Vagina (tissue), 2 donors: ENCODE measurements at regions of chr11 and their contacts with region 1.

Region 1: DNA sequence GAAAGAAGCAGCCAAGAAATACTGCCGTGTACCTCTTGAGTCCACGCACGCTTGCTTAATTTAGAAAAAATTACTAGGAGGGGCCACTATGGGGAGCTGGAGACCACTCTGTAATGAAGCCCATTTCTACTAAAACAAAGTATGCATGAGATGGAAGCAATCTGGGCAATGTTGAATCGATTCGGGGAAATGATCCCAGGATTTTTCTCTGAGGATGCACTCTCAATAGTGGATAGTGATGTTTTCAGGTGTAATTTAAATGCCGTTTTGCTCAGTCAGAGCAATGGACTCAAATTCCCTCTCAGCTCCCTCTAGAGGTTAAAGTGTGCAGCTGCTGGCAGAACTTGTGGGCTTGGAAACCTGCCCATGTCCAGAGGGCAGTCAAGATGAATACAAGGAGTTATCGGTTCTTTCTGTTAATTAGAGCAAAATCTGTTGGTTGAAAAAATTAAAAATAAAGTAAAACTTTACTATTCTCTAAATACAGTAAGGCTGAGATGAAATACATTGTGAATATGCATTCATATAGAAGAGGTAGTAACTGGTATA is 64.1 kb downstream of the ME3 start:
- DNase-seq: no peak
- H3K4me3 ChIP-seq: no peak overlapping the region
- H3K27ac ChIP-seq: peak overlapping the region; percentile 70
- H3K4me1 ChIP-seq: peaks cover 26% of the 10 kb centered on the region
- H3K27me3 ChIP-seq: no peaks in the 10 kb centered on the region
- CTCF ChIP-seq: peak; percentile 67 to 89 (median 73)
- POLR2A ChIP-seq: no peak

Region 2: GRCh38 chr11:86314646-86315045 is 293.7 kb before region 1 on chr11:
- intact Hi-C with region 1: no loop called
- DNase-seq: no peak
- H3K4me3 ChIP-seq: no peak overlapping the region
- H3K27ac ChIP-seq: no peak overlapping the region
- H3K4me1 ChIP-seq: no peaks in the 10 kb centered on the region
- H3K27me3 ChIP-seq: no peaks in the 10 kb centered on the region
- CTCF ChIP-seq: no peak
- POLR2A ChIP-seq: no peak

Region 3: DNA sequence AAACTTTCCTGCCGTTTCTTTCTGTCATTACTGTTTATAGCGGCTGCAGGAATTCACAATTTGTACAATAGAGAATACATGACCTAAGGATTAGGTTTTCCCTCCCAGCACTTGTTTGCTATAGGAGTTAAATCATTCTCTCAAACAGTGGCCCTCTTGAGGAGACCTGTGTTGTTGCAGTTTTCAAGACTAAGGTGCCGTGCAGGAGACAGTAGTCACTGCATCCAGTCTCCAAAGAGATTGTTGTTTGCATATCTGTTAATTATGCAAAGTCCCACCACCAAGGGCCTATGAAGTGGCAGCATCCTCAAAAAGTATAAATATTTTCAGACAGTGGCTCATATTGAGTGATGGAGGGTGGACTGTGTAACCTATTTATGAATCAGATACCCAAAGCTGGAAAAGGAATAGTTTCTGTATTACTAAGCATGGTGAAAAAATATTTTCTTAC is 194.3 kb after region 1 on chr11:
- intact Hi-C with region 1: loop called (anchors 5 kb)
- DNase-seq: no peak
- H3K4me3 ChIP-seq: peak overlapping the region; percentile 79 to 94
- H3K27ac ChIP-seq: peak overlapping the region; percentile 92
- H3K4me1 ChIP-seq: peaks cover 47% of the 10 kb centered on the region
- H3K27me3 ChIP-seq: no peaks in the 10 kb centered on the region
- CTCF ChIP-seq: peak in 1 of 3 experiments; percentile 52
- POLR2A ChIP-seq: no peak